ENCODE measurements at regions of chr19 and their contacts with region 1.

Region 1: DNA sequence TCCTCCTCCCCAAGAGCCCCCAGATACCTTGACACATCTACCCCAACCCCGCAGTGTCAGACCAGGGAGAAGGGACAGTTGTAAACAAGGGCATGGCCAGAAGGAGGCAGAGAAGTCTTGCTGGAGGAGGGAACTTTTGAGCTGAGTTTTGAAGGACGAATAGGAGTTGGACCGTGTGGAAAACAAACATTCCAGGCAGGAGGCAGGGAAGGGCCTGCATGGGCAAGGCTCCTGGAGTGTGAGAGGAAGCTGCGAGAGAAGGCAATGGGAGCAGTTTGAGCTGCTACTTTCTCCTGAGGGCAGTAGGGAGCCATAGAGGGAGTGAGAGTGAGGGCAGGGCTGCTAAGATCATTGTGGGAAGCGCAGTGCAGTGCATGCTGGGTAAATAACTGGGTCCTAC is 23.3 kb downstream of the IL12RB1 start:
- DNase-seq: no peak
- H3K4me3 ChIP-seq: no peak overlapping the region
- H3K27ac ChIP-seq: no peak overlapping the region
- H3K4me1 ChIP-seq: no peaks in the 10 kb centered on the region
- H3K27me3 ChIP-seq: no peaks in the 10 kb centered on the region
- CTCF ChIP-seq: no peak

Region 2: GRCh38 chr19:18074190-18074589 is 10.7 kb after region 1 on chr19:
- CTCF ChIA-PET with region 1: no interaction called
- POLR2A ChIA-PET with region 1: interaction called, 20 read pairs
- intact Hi-C with region 1: no loop called
- DNase-seq: no peak
- H3K4me3 ChIP-seq: no peak overlapping the region
- H3K27ac ChIP-seq: no peak overlapping the region
- H3K4me1 ChIP-seq: no peaks in the 10 kb centered on the region
- H3K27me3 ChIP-seq: no peaks in the 10 kb centered on the region
- CTCF ChIP-seq: no peak

Region 3: DNA sequence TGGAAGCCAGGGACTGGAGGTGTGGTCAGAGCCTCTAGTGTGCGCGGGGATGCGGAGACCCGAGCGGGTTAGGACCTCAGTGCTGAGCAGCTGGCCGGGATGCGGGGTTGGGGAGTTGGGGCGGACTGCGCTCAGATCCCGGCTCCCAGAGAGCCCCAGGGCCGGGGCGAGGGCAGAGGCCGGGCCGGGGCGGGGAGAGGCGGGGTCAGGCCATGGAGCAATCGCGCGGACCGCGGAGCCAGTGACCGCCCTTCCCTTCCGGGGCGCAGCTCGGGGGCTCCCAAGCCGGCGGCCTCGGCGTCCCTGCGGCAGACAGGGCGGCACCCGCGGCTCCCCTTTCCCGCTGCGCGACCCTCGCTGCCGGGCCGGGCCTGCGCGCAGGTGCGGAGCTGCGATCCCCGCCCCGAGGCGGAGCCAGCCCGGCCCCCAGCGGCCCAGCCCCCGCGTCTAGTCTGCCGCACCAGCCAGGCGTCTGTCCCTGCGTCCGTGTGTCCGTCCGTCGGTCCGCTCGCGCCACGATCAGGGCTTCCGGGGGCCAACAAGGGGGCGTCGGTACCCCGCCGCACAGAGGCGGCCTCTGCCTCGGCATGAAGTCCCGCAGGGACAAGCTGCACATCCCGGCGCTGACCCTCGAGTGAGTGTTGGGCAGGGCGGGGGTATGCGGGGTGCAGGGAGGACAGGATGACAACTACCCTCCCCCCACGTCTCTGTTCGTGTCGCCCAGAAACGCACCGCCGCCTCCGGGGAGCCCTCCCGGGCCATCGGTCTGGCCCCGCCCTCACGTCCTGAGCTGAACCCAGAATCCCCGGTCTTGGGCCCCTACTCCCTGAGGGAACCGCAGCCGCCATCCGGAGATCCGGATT is 46.5 kb after region 1 on chr19:
- CTCF ChIA-PET with region 1: no interaction called
- POLR2A ChIA-PET with region 1: no interaction called
- intact Hi-C with region 1: no loop called
- DNase-seq: peak in 1 of 2 experiments; percentile 66
- H3K4me3 ChIP-seq: peak overlapping the region; percentile 95
- H3K27ac ChIP-seq: no peak overlapping the region
- H3K4me1 ChIP-seq: peaks cover 13% of the 10 kb centered on the region
- H3K27me3 ChIP-seq: no peaks in the 10 kb centered on the region
- CTCF ChIP-seq: no peak

Region 4: GRCh38 chr19:18789883-18790565 is 726.6 kb after region 1 on chr19:
- CTCF ChIA-PET with region 1: no interaction called
- POLR2A ChIA-PET with region 1: no interaction called
- intact Hi-C with region 1: no loop called
- DNase-seq: no peak
- H3K4me3 ChIP-seq: no peak overlapping the region
- H3K27ac ChIP-seq: no peak overlapping the region
- H3K4me1 ChIP-seq: no peaks in the 10 kb centered on the region
- H3K27me3 ChIP-seq: peaks cover 5% of the 10 kb centered on the region; the same call in 1 of the 2 replicates
- CTCF ChIP-seq: no peak